ENCODE measurements at regions of chr4 and their contacts with region 1.

Region 1: GRCh38 chr4:140286456-140286855 is 87.0 kb upstream of the SCOC start:
- DNase-seq: no peak
- H3K4me3 ChIP-seq: no peak overlapping the region
- H3K27ac ChIP-seq: no peak overlapping the region
- H3K4me1 ChIP-seq: no peaks in the 10 kb centered on the region
- H3K27me3 ChIP-seq: no peaks in the 10 kb centered on the region
- CTCF ChIP-seq: no peak
- EP300 ChIP-seq: no peak
- POLR2A ChIP-seq: no peak

Region 2: DNA sequence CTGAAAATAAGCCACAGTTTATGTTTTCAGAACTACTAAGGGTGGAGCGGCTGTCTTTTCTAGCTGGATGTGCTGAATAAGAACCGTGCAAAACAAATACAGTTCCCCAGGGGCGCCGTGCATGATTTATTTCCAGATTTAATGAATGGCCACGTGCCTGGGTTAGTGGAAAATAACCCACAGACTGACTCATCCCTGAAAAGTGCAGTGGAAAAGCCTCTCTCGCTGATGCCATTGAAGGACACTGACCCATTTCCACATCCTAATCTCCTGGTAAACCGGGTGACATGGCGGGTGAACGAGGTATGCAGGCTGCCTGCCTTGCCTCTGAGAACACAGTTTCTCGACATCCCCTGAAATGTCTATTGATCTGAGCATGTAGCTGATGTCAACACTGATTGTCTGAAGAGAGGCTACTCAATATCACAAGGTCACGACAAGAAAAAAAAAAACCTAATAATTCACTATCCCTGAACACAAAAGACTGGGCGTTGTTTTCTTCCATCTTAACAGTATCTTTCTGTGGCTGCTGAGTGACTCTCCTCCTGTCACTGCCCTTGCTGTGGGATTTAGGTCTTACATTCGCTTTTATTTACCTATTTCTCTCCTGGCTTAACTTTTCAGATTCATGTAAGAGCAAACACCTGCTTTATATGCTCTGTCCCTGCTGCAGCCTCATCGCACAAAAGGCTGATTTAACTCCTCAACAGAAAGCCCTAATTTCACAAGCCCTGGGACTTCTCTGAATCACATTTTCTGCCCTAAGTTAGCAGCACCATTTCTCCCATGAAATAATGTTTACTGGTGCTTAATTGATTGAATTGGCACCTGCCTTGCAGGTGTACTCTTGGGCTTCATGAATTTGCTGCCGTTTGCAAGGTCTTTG is 10.1 kb after region 1 on chr4:
- in situ Hi-C with region 1: no loop called
- intact Hi-C with region 1: loop called (anchors 1 kb)
- DNase-seq: peak; percentile 40
- H3K4me3 ChIP-seq: no peak overlapping the region
- H3K27ac ChIP-seq: peak overlapping the region in 3 of 4 donors; percentile 13 to 53 (median 27)
- H3K4me1 ChIP-seq: peaks cover 0 to 14% (median 3%) of the 10 kb centered on the region in 4 donors
- H3K27me3 ChIP-seq: no peaks in the 10 kb centered on the region
- CTCF ChIP-seq: no peak
- EP300 ChIP-seq: no peak
- POLR2A ChIP-seq: no peak

Measured in transverse colon (tissue), 4 donors.